ENCODE measurements at regions of chr17 and their contacts with region 1.

Region 1: GRCh38 chr17:59859444-59860025 is 33.2 kb downstream of the TUBD1 start:
- DNase-seq: no peak
- ATAC-seq: peak; percentile 66
- H3K4me3 Mint-ChIP-seq: no peak overlapping the region
- H3K27ac Mint-ChIP-seq: peak overlapping the region; percentile 59
- H3K4me1 Mint-ChIP-seq: peaks cover 21% of the 10 kb centered on the region
- H3K27me3 Mint-ChIP-seq: no peaks in the 10 kb centered on the region
- CTCF ChIP-seq: peak; percentile 76

Region 2: DNA sequence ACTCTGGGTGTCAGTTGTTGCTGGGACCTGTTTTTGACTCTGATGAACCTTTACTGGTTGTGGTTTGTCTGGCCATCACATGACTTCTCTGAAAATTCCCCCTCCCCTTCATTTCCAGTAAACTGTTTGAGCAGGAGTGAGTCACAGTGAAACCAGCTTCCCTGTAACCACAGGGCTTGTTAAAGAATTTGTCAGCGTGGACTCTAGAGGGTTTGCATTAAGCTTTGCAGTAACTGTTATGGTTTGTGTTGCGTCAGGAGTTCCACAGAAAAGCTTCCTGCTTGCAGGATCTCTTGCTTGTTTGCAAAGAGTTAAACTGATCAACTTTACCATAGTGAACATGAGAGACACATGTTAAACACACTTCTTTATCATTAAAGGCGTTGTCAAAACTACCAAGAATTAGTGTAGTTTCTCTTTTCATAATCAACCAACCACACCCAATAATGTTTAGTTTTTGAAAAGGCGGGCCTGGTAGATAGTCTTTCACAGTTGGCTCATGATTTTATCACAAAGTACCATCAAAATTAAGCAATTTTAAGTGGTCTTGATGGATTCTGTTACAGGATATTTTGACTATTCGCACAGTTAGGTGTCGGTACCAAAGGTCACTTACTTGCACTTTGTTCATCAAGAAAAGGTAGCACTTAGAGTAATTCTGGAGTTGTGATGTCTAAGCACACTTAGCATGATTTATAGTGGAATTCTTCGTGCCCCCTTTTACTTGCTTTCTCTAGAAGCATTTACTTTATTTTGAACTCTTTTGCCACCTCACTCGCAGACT is 72.8 kb before region 1 on chr17:
- CTCF ChIA-PET with region 1: interaction called, 5 read pairs
- POLR2A ChIA-PET with region 1: interaction called, 10 read pairs
- intact Hi-C with region 1: no loop called
- DNase-seq: peak; percentile 92
- ATAC-seq: peak; percentile 86
- H3K4me3 Mint-ChIP-seq: peak overlapping the region; percentile 72
- H3K27ac Mint-ChIP-seq: peak overlapping the region; percentile 99
- H3K4me1 Mint-ChIP-seq: peaks cover 58% of the 10 kb centered on the region
- H3K27me3 Mint-ChIP-seq: no peaks in the 10 kb centered on the region
- CTCF ChIP-seq: no peak

Region 3: DNA sequence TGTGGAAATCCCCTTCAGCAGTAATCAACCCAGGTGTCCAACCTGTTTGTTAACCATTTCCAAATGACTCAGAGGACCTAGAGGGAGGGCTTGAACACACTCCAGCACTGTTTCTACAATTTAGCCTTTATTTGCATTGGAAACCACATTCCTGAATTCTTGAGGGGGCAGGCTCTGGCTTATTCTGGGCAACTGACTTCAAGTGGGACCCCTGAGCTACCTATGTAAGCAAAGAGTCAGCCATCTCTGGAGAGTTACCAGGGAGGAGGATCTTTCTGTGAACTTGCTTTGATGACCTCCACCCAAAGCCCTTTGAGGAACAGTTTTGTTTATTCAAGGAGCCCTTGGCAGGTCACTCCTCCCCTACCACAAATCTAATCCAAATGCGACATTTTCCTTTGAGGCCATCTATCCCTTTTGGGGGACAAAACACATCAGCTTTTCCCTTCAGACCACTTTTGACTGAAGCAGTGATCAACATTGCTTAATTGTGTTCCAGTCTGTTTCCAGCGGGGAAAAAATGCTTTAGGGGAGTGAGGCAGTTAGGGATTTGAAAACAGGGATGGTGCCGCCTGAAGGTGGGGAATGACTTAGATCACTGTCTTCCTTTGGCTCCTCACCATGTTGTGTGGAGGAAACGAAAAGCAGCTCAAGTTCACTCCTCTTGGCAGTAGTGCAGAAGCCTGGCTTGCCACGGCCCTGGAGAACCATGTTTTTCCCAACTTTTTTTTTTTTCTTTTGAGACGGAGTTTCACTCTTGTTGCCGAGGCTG is 13.0 kb before region 1 on chr17:
- CTCF ChIA-PET with region 1: interaction called, 40 read pairs
- POLR2A ChIA-PET with region 1: interaction called, 3 read pairs
- intact Hi-C with region 1: no loop called
- DNase-seq: peak; percentile 40
- ATAC-seq: peak; percentile 45
- H3K4me3 Mint-ChIP-seq: peak overlapping the region; percentile 18
- H3K27ac Mint-ChIP-seq: peak overlapping the region; percentile 80
- H3K4me1 Mint-ChIP-seq: peaks cover 59% of the 10 kb centered on the region
- H3K27me3 Mint-ChIP-seq: no peaks in the 10 kb centered on the region
- CTCF ChIP-seq: no peak

Region 4: DNA sequence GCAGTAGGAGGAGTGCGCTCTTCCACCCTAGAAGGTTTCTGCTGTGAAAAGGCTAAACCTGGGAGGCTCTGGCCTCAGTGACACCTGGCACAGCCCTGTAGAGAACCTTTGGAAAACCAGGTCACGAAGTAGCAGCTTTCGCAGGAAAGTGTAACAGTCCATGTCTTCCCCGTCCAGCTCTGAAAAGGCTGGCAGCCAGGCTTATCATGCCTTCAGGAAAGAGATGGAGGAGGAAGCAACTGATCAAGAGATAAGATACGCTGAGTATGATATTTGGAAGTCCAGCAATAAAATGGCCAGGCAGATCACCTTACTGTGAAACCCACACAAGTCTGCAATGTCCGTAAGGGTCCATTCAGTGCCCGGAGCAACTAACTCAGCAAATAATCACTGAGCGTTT is 10.9 kb after region 1 on chr17:
- CTCF ChIA-PET with region 1: interaction called, 13 read pairs
- POLR2A ChIA-PET with region 1: no interaction called
- intact Hi-C with region 1: no loop called
- DNase-seq: no peak
- ATAC-seq: no peak
- H3K4me3 Mint-ChIP-seq: no peak overlapping the region
- H3K27ac Mint-ChIP-seq: no peak overlapping the region
- H3K4me1 Mint-ChIP-seq: peaks cover 3% of the 10 kb centered on the region
- H3K27me3 Mint-ChIP-seq: no peaks in the 10 kb centered on the region
- CTCF ChIP-seq: no peak

Region 5: GRCh38 chr17:59914274-59914854 is 54.8 kb after region 1 on chr17:
- CTCF ChIA-PET with region 1: no interaction called
- POLR2A ChIA-PET with region 1: no interaction called
- intact Hi-C with region 1: no loop called
- DNase-seq: no peak
- ATAC-seq: no peak
- H3K4me3 Mint-ChIP-seq: no peak overlapping the region
- H3K27ac Mint-ChIP-seq: no peak overlapping the region
- H3K4me1 Mint-ChIP-seq: no peaks in the 10 kb centered on the region
- H3K27me3 Mint-ChIP-seq: no peaks in the 10 kb centered on the region
- CTCF ChIP-seq: peak; percentile 69

Region 6: GRCh38 chr17:59972778-59973177 is 113.2 kb after region 1 on chr17:
- CTCF ChIA-PET with region 1: no interaction called
- POLR2A ChIA-PET with region 1: no interaction called
- intact Hi-C with region 1: no loop called
- DNase-seq: no peak
- ATAC-seq: no peak
- H3K4me3 Mint-ChIP-seq: no peak overlapping the region
- H3K27ac Mint-ChIP-seq: no peak overlapping the region
- H3K4me1 Mint-ChIP-seq: no peaks in the 10 kb centered on the region
- H3K27me3 Mint-ChIP-seq: no peaks in the 10 kb centered on the region
- CTCF ChIP-seq: no peak

Measured in activated CD8-positive, alpha-beta T cell treated with anti-CD3 and anti-CD28 coated beads for 36 hours (primary cell).